HepG2 (cell line): ENCODE measurements at regions of chr6 and their contacts with region 1.

Region 1: GRCh38 chr6:79869600-79870084 is 77.7 kb downstream of the ELOVL4 start:
- DNase-seq: peak; percentile 53
- ATAC-seq: peak; percentile 100
- H3K4me3 ChIP-seq: peak overlapping the region; percentile 5 to 51 (median 48); a peak in 3 of 6 replicates
- H3K27ac ChIP-seq: no peak overlapping the region
- H3K4me1 ChIP-seq: peaks cover 19% of the 10 kb centered on the region
- H3K27me3 ChIP-seq: peaks cover 0 to 8% of the 10 kb centered on the region in 2 experiments; a peak in 1 of 5 replicates
- CTCF ChIP-seq: peak; percentile 94
- EP300 ChIP-seq: no peak
- POLR2A ChIP-seq: no peak
- RAD21 ChIP-seq: peak; percentile 58

Region 2: GRCh38 chr6:78867370-78868040 is 1002.1 kb before region 1 on chr6 and contains the start of gene IRAK1BP1:
- CTCF ChIA-PET with region 1: no interaction called
- POLR2A ChIA-PET with region 1: no interaction called
- in situ Hi-C with region 1: no loop called
- intact Hi-C with region 1: loop called (anchors 5 kb)
- DNase-seq: peak; percentile 75
- ATAC-seq: peak; percentile 99
- H3K4me3 ChIP-seq: peak within 1 kb of the TSS; percentile 80 to 88 (median 87)
- H3K27ac ChIP-seq: peak within 1 kb of the TSS; percentile 64
- H3K4me1 ChIP-seq: peaks cover 12% of the 10 kb centered on the region
- H3K27me3 ChIP-seq: no peaks in the 10 kb centered on the region
- CTCF ChIP-seq: peak; percentile 38; the same call in 1 of the 2 replicates
- EP300 ChIP-seq: no peak
- POLR2A ChIP-seq: peak; percentile 50 to 65
- RAD21 ChIP-seq: peak; percentile 33; the same call in 1 of the 2 replicates
- total RNA-seq, gene IRAK1BP1: 1.5 and 1.9 TPM in 2 replicates

Region 3: GRCh38 chr6:79617518-79617941 is 252.1 kb before region 1 on chr6:
- CTCF ChIA-PET with region 1: no interaction called
- POLR2A ChIA-PET with region 1: no interaction called
- in situ Hi-C with region 1: no loop called
- intact Hi-C with region 1: no loop called
- DNase-seq: peak; percentile 91
- ATAC-seq: peak; percentile 78
- H3K4me3 ChIP-seq: 0 out of 6 replicates have a peak overlapping the region, but pooled peaks of 1 of the 3 experiments have one; percentile 0
- H3K27ac ChIP-seq: peak overlapping the region; percentile 86
- H3K4me1 ChIP-seq: peaks cover 100% of the 10 kb centered on the region
- H3K27me3 ChIP-seq: no peaks in the 10 kb centered on the region
- CTCF ChIP-seq: no peak
- EP300 ChIP-seq: peak in 1 of 2 experiments; percentile 91; a peak in 2 of 4 replicates
- POLR2A ChIP-seq: no peak
- RAD21 ChIP-seq: no peak

Region 4: DNA sequence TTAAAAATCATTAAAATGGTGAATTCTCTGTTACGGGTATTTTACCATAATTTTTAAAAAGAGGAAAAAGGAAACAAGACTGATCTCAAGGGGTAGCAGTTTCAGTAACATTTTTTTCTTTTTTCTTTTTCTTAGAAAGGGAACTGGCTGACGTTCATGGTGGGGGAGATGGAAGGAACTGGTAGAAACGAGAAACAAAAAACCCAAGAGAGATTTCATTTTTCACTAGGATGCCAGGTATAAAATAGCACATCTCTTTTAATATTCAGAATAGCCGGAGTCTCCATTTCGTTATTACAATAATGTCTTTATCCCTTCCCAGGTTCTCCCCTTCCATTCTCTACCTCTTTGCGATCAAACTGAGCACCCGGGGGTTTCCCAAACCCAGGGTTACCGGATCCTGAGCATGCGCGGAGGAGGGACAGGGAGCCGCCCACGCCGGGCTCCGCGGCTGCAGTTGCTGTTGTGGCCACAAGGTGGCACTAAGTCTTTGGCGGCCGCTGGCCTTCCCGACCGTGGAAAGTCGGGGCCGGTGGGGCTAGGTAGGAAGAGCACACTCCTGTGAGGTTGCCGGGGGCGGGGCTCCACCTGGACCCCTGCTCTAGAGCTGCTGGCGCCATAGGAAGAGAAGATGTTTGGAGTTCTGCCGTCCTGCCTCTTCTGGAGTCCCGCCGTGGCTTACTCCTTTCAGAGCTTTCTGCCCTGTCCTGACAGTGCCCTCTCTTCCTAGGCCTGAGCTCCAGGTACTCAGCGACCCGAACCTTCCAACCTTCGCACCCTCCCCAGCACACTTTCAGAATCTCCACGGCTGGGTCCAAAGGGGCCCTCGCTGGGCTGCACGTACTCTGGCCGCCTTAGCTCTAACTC is 91.7 kb before region 1 on chr6:
- CTCF ChIA-PET with region 1: interaction called, 20 read pairs
- POLR2A ChIA-PET with region 1: no interaction called
- in situ Hi-C with region 1: no loop called
- intact Hi-C with region 1: loop called (anchors 1 kb)
- DNase-seq: peak; percentile 43
- ATAC-seq: peak; percentile 94
- H3K4me3 ChIP-seq: peak overlapping the region; percentile 41 to 75 (median 48)
- H3K27ac ChIP-seq: no peak overlapping the region
- H3K4me1 ChIP-seq: peaks cover 18% of the 10 kb centered on the region
- H3K27me3 ChIP-seq: peaks cover 0 to 16% of the 10 kb centered on the region in 2 experiments; a peak in 1 of 5 replicates
- CTCF ChIP-seq: peak; percentile 97
- EP300 ChIP-seq: no peak
- POLR2A ChIP-seq: no peak
- RAD21 ChIP-seq: peak; percentile 65

Region 5: DNA sequence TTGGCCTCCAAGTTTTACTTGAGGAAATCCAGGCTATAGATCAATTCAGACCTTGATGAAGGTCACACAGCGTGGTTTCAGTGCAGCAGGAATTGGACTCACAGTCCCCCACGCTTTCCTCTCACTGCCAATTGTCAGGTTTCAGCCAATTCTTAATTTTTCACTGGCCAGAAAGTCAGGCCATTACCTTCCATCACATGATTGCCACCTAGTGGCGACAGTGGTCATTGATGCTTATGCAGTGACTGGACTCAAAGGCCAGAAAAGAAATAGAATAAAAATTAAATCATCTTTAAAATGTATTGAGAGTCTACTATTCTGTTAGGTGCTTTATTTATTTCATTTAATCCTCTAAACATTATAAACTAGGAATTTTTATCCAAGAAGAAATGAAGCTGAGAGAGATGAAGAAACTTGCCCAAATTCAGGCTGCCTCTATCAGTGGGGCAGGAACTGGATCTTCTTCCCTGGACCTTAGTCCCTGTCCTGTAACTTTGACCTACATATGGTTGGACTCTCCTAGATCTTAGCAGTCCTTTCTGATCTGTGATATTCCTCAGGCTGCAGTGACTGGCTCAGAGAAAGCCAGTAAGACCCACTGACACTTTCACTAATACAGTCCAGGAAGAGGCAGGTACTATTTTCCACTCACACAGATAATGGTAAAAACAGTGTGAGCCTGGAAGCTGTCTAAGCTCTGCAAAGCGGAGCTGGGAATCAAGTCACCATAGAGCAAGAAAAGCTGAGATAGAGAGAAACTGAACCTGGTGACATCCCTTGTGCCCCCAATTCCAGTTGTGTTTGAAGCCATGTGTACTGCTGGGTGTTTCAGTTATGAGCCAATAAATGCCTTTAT is 55.6 kb before region 1 on chr6:
- CTCF ChIA-PET with region 1: no interaction called
- POLR2A ChIA-PET with region 1: no interaction called
- in situ Hi-C with region 1: no loop called
- intact Hi-C with region 1: loop called (anchors 2 kb)
- DNase-seq: peak; percentile 54
- ATAC-seq: peak; percentile 85
- H3K4me3 ChIP-seq: no peak overlapping the region
- H3K27ac ChIP-seq: no peak overlapping the region
- H3K4me1 ChIP-seq: no peaks in the 10 kb centered on the region
- H3K27me3 ChIP-seq: peaks cover 0 to 23% of the 10 kb centered on the region in 2 experiments; a peak in 2 of 5 replicates
- CTCF ChIP-seq: peak; percentile 79
- EP300 ChIP-seq: no peak
- POLR2A ChIP-seq: no peak
- RAD21 ChIP-seq: 0 out of 2 replicates have a peak, but pooled peaks have one; percentile 29

Region 6: GRCh38 chr6:79888587-79888986 is 18.9 kb after region 1 on chr6:
- CTCF ChIA-PET with region 1: no interaction called
- POLR2A ChIA-PET with region 1: no interaction called
- in situ Hi-C with region 1: no loop called
- intact Hi-C with region 1: no loop called
- DNase-seq: no peak
- ATAC-seq: no peak
- H3K4me3 ChIP-seq: no peak overlapping the region
- H3K27ac ChIP-seq: no peak overlapping the region
- H3K4me1 ChIP-seq: no peaks in the 10 kb centered on the region
- H3K27me3 ChIP-seq: no peaks in the 10 kb centered on the region
- CTCF ChIP-seq: no peak
- EP300 ChIP-seq: no peak
- POLR2A ChIP-seq: no peak
- RAD21 ChIP-seq: no peak

Region 7: DNA sequence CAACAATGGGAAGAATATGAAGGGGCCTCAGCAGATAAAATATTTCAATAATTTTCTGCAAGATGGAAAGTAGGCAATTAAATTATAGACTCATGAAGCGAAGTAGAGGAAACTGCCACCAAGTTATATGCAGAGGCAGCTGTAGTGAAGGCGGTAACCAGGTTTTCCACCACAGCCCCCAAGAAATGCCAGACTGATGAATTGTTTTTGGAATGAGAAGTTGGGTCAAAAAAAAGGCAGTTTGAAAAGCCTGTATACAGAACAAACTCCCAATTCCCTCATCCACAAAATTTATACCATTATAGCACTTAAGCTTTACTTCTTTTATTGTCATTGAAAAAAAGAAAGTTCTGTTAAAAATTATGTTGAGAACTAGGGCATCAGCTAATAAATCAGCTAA is 32.4 kb after region 1 on chr6:
- CTCF ChIA-PET with region 1: no interaction called
- POLR2A ChIA-PET with region 1: no interaction called
- in situ Hi-C with region 1: no loop called
- intact Hi-C with region 1: no loop called
- DNase-seq: no peak
- ATAC-seq: no peak
- H3K4me3 ChIP-seq: no peak overlapping the region
- H3K27ac ChIP-seq: no peak overlapping the region
- H3K4me1 ChIP-seq: no peaks in the 10 kb centered on the region
- H3K27me3 ChIP-seq: no peaks in the 10 kb centered on the region; a peak in 1 of 5 replicates
- CTCF ChIP-seq: no peak
- EP300 ChIP-seq: no peak
- POLR2A ChIP-seq: no peak
- RAD21 ChIP-seq: no peak

Region 8: GRCh38 chr6:80094017-80094416 is 224.4 kb after region 1 on chr6:
- CTCF ChIA-PET with region 1: no interaction called
- POLR2A ChIA-PET with region 1: no interaction called
- in situ Hi-C with region 1: no loop called
- intact Hi-C with region 1: loop called (anchors 5 kb)
- DNase-seq: no peak
- ATAC-seq: no peak
- H3K4me3 ChIP-seq: no peak overlapping the region
- H3K27ac ChIP-seq: no peak overlapping the region
- H3K4me1 ChIP-seq: no peaks in the 10 kb centered on the region
- H3K27me3 ChIP-seq: no peaks in the 10 kb centered on the region
- CTCF ChIP-seq: peak; percentile 61
- EP300 ChIP-seq: no peak
- POLR2A ChIP-seq: no peak
- RAD21 ChIP-seq: peak; percentile 34; the same call in 1 of the 2 replicates